ENCODE measurements at regions of chr12 and their contacts with region 1.

Region 1: DNA sequence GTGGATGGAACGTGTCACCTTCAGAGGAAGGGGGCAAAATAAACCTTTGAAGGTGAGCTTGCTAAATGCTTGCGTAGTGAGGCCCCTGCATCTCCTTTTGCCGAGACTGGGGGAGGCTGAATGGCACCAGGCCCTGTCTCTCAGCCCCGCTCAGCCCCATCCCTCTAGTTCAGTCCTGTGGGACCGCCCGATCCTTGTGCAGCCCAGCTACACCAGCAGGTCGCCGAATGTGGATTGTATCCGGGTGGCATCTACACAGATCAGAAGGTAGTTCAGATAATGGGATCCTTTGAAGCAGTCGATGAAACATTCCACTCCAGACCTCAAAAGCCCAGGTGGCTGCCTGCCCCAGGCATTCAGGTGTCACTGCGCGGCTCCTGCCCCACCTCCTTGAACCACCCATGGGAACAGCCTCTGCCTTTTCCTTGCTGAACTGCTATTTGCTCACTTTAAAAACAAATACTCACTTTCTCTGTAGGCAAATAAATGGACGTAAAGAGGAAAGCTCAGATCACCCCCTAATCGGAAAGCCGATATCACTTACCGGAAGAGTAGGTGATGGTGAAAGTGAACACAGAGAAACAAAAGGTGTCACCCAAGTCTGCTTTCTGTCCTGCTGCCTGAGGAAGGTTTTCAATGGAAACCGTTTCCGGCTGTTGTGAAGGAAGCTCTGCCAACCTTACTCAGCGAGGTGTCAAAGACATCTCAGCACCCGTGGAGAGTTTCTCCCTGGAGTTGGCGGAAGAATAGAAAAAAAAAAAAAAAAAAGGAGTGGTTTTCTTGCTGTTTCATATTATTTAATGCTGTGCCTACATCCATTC is 100.3 kb upstream of the NCOR2 start:
- DNase-seq: no peak
- H3K4me3 ChIP-seq: no peak overlapping the region
- H3K4me3 Mint-ChIP-seq: no peak overlapping the region
- H3K27ac ChIP-seq: no peak overlapping the region
- H3K27ac Mint-ChIP-seq: peak overlapping the region in 1 of 7 donors; percentile 37
- H3K4me1 ChIP-seq: peaks cover 32 to 45% of the 10 kb centered on the region in 2 donors
- H3K4me1 Mint-ChIP-seq: peaks cover 38% of the 10 kb centered on the region
- H3K27me3 ChIP-seq: no peaks in the 10 kb centered on the region
- H3K27me3 Mint-ChIP-seq: peaks cover 0 to 3% (median 2%) of the 10 kb centered on the region in 3 donors
- CTCF ChIP-seq: no peak

Region 2: GRCh38 chr12:124567661-124568373 is 99.9 kb before region 1 on chr12:
- intact Hi-C with region 1: loop called in 1 of 2 experiments (anchors 5 kb)
- DNase-seq: peak; percentile 91 to 95 (median 95)
- H3K4me3 ChIP-seq: peak overlapping the region; percentile 14 to 74 (median 24)
- H3K4me3 Mint-ChIP-seq: peak overlapping the region; percentile 77 to 78
- H3K27ac ChIP-seq: peak overlapping the region; percentile 86 to 96
- H3K27ac Mint-ChIP-seq: peak overlapping the region; percentile 94 to 98 (median 96)
- H3K4me1 ChIP-seq: peaks cover 44 to 50% of the 10 kb centered on the region in 2 donors
- H3K4me1 Mint-ChIP-seq: peaks cover 47% of the 10 kb centered on the region
- H3K27me3 ChIP-seq: no peaks in the 10 kb centered on the region
- H3K27me3 Mint-ChIP-seq: no peaks in the 10 kb centered on the region
- CTCF ChIP-seq: no peak

Region 3: DNA sequence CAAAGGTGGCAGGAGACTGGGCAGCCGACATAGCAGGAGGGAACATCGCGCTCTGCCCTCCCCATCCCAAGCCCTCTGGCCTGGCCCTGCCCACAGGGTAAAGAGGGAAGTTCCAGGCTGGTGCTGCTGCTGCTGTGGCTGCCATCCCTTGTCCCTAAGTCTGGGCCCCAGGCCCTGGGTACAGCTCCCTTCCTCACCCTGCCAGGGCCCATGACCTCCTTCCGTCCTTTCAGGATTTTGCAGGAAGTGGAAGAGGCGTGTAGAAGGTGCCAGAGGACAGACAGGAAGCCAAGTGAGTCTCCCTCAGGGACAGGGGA is 85.7 kb before region 1 on chr12:
- intact Hi-C with region 1: loop called in 1 of 2 experiments (anchors 5 kb)
- DNase-seq: peak; percentile 57 to 68 (median 66)
- H3K4me3 ChIP-seq: peak overlapping the region in 1 of 3 experiments; percentile 46
- H3K4me3 Mint-ChIP-seq: peak overlapping the region; percentile 34 to 48
- H3K27ac ChIP-seq: peak overlapping the region; percentile 37 to 69
- H3K27ac Mint-ChIP-seq: peak overlapping the region; percentile 12 to 93 (median 76)
- H3K4me1 ChIP-seq: peaks cover 15 to 19% of the 10 kb centered on the region in 2 donors
- H3K4me1 Mint-ChIP-seq: peaks cover 22% of the 10 kb centered on the region
- H3K27me3 ChIP-seq: no peaks in the 10 kb centered on the region
- H3K27me3 Mint-ChIP-seq: peaks cover 2 to 6% (median 4%) of the 10 kb centered on the region in 3 donors
- CTCF ChIP-seq: no peak

Region 4: GRCh38 chr12:124625867-124626675 is 41.6 kb before region 1 on chr12:
- intact Hi-C with region 1: loop called (anchors 5 kb)
- DNase-seq: peak; percentile 94 to 98 (median 95)
- H3K4me3 ChIP-seq: peak overlapping the region in 2 of 3 experiments; percentile 15 to 69
- H3K4me3 Mint-ChIP-seq: peak overlapping the region; percentile 78 to 89
- H3K27ac ChIP-seq: peak overlapping the region; percentile 96 to 97
- H3K27ac Mint-ChIP-seq: peak overlapping the region; percentile 97 to 100 (median 99)
- H3K4me1 ChIP-seq: peaks cover 58 to 65% of the 10 kb centered on the region in 2 donors
- H3K4me1 Mint-ChIP-seq: peaks cover 69% of the 10 kb centered on the region
- H3K27me3 ChIP-seq: no peaks in the 10 kb centered on the region
- H3K27me3 Mint-ChIP-seq: no peaks in the 10 kb centered on the region
- CTCF ChIP-seq: no peak

Region 5: GRCh38 chr12:124636138-124636978 is 31.4 kb before region 1 on chr12:
- intact Hi-C with region 1: loop called in 1 of 2 experiments (anchors 5 kb)
- DNase-seq: peak; percentile 85 to 93 (median 93)
- H3K4me3 ChIP-seq: peak overlapping the region in 1 of 3 experiments; percentile 2
- H3K4me3 Mint-ChIP-seq: no peak overlapping the region
- H3K27ac ChIP-seq: peak overlapping the region; percentile 14 to 80
- H3K27ac Mint-ChIP-seq: peak overlapping the region; percentile 85 to 96 (median 90)
- H3K4me1 ChIP-seq: peaks cover 77 to 90% of the 10 kb centered on the region in 2 donors
- H3K4me1 Mint-ChIP-seq: peaks cover 70% of the 10 kb centered on the region
- H3K27me3 ChIP-seq: no peaks in the 10 kb centered on the region
- H3K27me3 Mint-ChIP-seq: peaks cover 0 to 5% (median 4%) of the 10 kb centered on the region in 3 donors
- CTCF ChIP-seq: no peak

Region 6: GRCh38 chr12:124777399-124778372 is 110.0 kb after region 1 on chr12:
- intact Hi-C with region 1: no loop called
- DNase-seq: peak in 2 of 3 donors; percentile 43 to 71
- H3K4me3 ChIP-seq: peak overlapping the region in 1 of 3 experiments; percentile 21
- H3K4me3 Mint-ChIP-seq: peak overlapping the region in 1 of 2 donors; percentile 46
- H3K27ac ChIP-seq: no peak overlapping the region
- H3K27ac Mint-ChIP-seq: peak overlapping the region in 4 of 7 donors; percentile 36 to 78 (median 54)
- H3K4me1 ChIP-seq: peaks cover 54 to 55% of the 10 kb centered on the region in 2 donors
- H3K4me1 Mint-ChIP-seq: peaks cover 54% of the 10 kb centered on the region
- H3K27me3 ChIP-seq: no peaks in the 10 kb centered on the region
- H3K27me3 Mint-ChIP-seq: peaks cover 0 to 8% (median under 1%) of the 10 kb centered on the region in 3 donors
- CTCF ChIP-seq: no peak

Measured in CD14-positive monocyte (primary cell).